Naive thymus-derived CD4-positive, alpha-beta T cell (primary cell): ENCODE measurements at regions of chr10 and their contacts with region 1.

Region 1: GRCh38 chr10:104268716-104269645 is at the start of gene GSTO2:
- DNase-seq: peak; percentile 87 to 99 (median 98)
- ATAC-seq: peak; percentile 97
- H3K4me3 ChIP-seq: peak within 1 kb of the TSS; percentile 77
- H3K4me3 Mint-ChIP-seq: peak within 1 kb of the TSS; percentile 87 to 98 (median 94)
- H3K27ac ChIP-seq: peak within 1 kb of the TSS; percentile 93
- H3K27ac Mint-ChIP-seq: peak within 1 kb of the TSS; percentile 85 to 98 (median 96)
- H3K4me1 ChIP-seq: peaks cover 23 to 25% of the 10 kb centered on the region in 2 donors
- H3K4me1 Mint-ChIP-seq: peaks cover 25 to 55% (median 49%) of the 10 kb centered on the region in 7 donors
- H3K27me3 ChIP-seq: no peaks in the 10 kb centered on the region
- H3K27me3 Mint-ChIP-seq: no peaks in the 10 kb centered on the region
- total RNA-seq, gene GSTO2: 1.1 to 2.5 (median 1.4) TPM

Region 2: DNA sequence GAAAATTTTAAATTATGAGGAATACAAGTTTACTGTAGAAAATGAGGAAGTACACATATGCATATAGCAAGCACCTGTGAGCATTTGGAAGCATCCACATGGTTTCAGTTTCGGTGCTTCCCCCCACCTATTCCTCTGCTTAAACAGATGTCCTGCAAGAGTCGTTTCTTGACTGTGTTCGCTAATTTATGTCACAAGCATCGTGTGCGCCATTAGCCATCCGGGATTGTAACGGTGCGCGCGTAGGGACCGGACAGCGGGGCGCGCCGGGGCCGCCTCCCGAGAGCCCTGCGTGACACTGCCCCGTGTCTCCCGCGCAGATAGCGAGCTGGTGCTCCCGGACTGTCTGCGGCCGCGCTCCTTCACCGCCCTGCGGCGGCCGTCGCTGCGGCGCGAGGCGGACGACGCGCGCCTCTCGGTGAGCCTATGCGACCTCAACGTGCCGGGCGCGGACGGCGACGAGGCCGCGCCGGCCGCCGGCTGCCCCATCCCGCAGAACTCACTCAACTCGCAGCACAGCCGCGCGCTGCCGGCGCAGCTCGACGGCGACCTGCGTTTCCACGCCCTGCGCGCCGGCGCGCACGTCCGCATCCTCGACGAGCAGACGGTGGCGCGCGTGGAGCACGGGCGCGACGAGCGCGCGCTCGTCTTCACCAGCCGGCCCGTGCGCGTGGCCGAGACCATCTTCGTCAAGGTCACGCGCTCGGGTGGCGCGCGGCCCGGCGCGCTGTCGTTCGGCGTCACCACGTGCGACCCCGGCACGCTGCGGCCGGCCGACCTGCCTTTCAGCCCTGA is 684.6 kb before region 1 on chr10:
- CTCF ChIA-PET with region 1: no interaction called
- POLR2A ChIA-PET with region 1: no interaction called
- intact Hi-C with region 1: loop called in 1 of 2 experiments (anchors 1 kb)
- DNase-seq: peak; percentile 46 to 69 (median 58)
- ATAC-seq: peak; percentile 86
- H3K4me3 ChIP-seq: peak overlapping the region; percentile 91
- H3K4me3 Mint-ChIP-seq: peak overlapping the region; percentile 84 to 98 (median 90)
- H3K27ac ChIP-seq: peak overlapping the region; percentile 65
- H3K27ac Mint-ChIP-seq: peak overlapping the region; percentile 84 to 98 (median 96)
- H3K4me1 ChIP-seq: peaks cover 6 to 10% of the 10 kb centered on the region in 2 donors
- H3K4me1 Mint-ChIP-seq: peaks cover 4 to 27% (median 18%) of the 10 kb centered on the region in 7 donors
- H3K27me3 ChIP-seq: no peaks in the 10 kb centered on the region
- H3K27me3 Mint-ChIP-seq: peaks cover 0 to 10% (median 0%) of the 10 kb centered on the region in 5 donors

Region 3: DNA sequence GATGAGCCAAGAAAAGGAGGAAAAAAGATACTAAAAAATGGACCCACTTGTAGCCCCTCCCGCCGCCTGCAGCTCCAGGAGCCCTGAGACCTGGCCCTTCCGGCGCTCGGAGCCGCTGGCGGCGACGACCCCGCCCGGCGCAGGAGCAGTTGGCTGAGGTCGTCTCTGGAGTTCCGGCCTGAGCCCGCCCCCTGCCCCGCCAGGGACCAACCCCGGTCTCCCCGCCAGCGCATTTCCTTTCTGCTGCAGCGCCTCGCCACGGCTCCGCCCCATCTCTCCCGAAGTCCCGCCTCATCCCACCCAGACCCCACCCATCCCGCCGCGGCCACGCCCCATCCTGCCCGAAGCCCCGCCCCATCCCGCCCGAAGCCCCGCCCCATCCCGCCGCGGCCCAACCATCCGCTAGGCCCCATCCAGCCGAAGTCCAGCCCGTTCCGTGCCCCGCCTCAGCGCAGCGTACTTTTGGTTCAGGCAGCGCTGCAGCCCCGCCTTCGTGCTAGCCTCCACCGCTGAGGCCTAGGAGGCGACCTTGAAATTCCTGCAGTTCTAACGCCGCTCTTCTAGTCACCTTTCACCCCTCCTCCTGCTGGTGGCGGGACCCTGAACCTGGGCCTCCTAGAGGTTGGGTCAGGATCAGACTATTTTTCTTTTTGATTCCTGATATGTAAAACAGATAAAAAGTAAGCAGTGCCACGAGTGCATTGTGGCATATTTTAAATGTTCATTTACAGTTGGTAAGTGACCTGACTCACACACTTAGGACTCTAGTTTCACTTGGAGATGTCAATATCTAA is 350.7 kb before region 1 on chr10 and contains the start of gene STN1:
- CTCF ChIA-PET with region 1: no interaction called
- POLR2A ChIA-PET with region 1: no interaction called
- intact Hi-C with region 1: loop called (anchors 1 kb)
- DNase-seq: peak; percentile 81 to 95 (median 94)
- ATAC-seq: peak; percentile 97
- H3K4me3 ChIP-seq: peak within 1 kb of the TSS; percentile 89
- H3K4me3 Mint-ChIP-seq: peak within 1 kb of the TSS; percentile 88 to 99 (median 97)
- H3K27ac ChIP-seq: peak within 1 kb of the TSS; percentile 79
- H3K27ac Mint-ChIP-seq: peak within 1 kb of the TSS; percentile 95 to 99 (median 97)
- H3K4me1 ChIP-seq: peaks cover 28 to 31% of the 10 kb centered on the region in 2 donors
- H3K4me1 Mint-ChIP-seq: peaks cover 15 to 44% (median 38%) of the 10 kb centered on the region in 7 donors
- H3K27me3 ChIP-seq: no peaks in the 10 kb centered on the region
- H3K27me3 Mint-ChIP-seq: no peaks in the 10 kb centered on the region
- total RNA-seq, gene STN1: 28.8 to 42.6 (median 34.8) TPM

Region 4: DNA sequence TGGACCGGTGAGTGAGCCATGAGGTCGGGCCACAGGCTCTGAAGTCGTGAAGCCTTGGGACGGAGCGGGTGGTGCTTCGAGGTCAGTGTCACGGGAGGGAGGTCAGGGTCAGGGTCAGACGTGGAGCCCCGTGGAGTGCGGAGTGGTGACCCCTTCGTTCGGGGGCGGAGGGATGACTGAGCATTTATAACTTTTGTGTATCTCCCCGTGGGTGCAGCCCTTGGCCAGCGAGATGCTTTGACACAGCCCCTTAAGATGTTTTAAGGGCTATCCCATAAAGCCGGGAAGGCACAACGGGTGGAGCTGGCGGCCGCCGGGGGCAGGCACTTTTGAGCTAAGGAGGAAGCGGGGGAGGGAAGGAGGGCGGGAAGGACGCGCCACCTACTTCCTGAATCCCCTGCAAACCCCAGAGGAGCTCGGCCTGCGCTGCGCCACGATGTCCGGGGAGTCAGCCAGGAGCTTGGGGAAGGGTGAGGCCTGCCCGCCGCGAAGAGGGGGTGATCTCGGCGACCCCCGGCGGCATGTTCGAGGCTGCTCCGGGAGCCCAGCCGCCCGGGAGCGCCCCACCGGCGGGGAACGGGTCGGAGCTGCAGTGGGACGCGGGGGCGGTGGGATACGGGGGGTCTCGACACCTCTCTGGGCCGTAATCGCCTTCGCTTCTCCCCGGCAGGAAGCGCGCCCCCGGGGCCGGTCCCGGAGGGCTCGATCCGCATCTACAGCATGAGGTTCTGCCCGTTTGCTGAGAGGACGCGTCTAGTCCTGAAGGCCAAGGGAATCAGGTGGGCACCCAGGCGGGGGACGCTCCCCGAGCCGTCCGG is 14.3 kb before region 1 on chr10 and contains the start of gene GSTO1:
- CTCF ChIA-PET with region 1: interaction called, 9 read pairs
- POLR2A ChIA-PET with region 1: interaction called, 68 read pairs
- intact Hi-C with region 1: loop called (anchors 1 kb)
- DNase-seq: peak; percentile 28 to 59 (median 35)
- ATAC-seq: peak; percentile 71
- H3K4me3 ChIP-seq: peak within 1 kb of the TSS; percentile 83
- H3K4me3 Mint-ChIP-seq: peak within 1 kb of the TSS; percentile 84 to 100 (median 96)
- H3K27ac ChIP-seq: peak within 1 kb of the TSS; percentile 89
- H3K27ac Mint-ChIP-seq: peak within 1 kb of the TSS; percentile 85 to 97 (median 96)
- H3K4me1 ChIP-seq: peaks cover 9 to 23% of the 10 kb centered on the region in 2 donors
- H3K4me1 Mint-ChIP-seq: peaks cover 33 to 56% (median 48%) of the 10 kb centered on the region in 7 donors
- H3K27me3 ChIP-seq: no peaks in the 10 kb centered on the region
- H3K27me3 Mint-ChIP-seq: peaks cover 0 to 19% (median 0%) of the 10 kb centered on the region in 5 donors
- total RNA-seq, gene GSTO1: 28.1 to 129 (median 49.1) TPM

Region 5: GRCh38 chr10:104308439-104308903 is 39.5 kb after region 1 on chr10:
- CTCF ChIA-PET with region 1: interaction called, 16 read pairs
- POLR2A ChIA-PET with region 1: interaction called, 3 read pairs
- intact Hi-C with region 1: loop called in 1 of 2 experiments (anchors 1 kb)
- DNase-seq: peak in 7 of 9 donors; percentile 51 to 77 (median 71)
- ATAC-seq: peak; percentile 58
- H3K4me3 ChIP-seq: peak overlapping the region; percentile 19
- H3K4me3 Mint-ChIP-seq: peak overlapping the region; percentile 25 to 83 (median 75)
- H3K27ac ChIP-seq: no peak overlapping the region
- H3K27ac Mint-ChIP-seq: peak overlapping the region; percentile 79 to 94 (median 87)
- H3K4me1 ChIP-seq: peaks cover 39 to 43% of the 10 kb centered on the region in 2 donors
- H3K4me1 Mint-ChIP-seq: peaks cover 53 to 89% (median 75%) of the 10 kb centered on the region in 7 donors
- H3K27me3 ChIP-seq: no peaks in the 10 kb centered on the region
- H3K27me3 Mint-ChIP-seq: no peaks in the 10 kb centered on the region

Region 6: DNA sequence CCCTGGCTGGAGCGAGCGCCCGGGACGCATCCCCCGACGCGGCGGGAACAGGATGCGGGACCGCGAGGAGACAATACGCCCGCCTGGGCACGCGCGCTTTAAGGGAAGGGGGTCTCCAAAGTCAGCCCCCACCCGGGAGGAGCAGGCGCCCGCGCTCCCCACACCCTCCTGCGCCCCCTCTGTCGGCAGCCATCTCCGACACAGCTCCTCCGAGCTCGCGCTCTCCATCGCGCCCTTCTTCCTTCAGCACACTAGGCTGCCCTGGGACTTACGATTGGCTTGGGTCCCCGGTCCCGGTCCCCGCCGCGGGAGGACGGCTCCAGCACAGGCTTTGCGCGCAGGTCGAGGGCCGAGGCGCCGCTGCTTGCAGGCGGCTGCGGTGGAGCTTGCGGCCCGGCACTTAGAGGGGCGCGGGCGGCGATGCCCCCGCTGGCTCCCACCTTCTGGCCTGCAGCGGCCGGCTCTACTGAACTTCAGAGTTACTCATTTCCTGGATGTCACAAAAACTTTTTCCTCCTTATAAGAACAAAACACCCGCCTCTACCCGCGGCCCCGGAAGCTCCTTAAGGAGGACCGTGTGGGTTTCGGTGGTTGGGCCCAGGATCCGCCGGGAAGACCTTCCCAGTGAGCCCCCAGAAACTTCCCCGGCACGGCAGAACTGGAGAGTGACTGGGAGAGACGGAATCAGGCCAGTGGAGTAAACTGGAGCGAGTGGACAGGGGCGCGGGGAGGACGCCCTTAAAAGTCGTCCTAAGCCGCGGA is 69.2 kb after region 1 on chr10 and contains the start of gene ITPRIP:
- CTCF ChIA-PET with region 1: interaction called, 5 read pairs
- POLR2A ChIA-PET with region 1: interaction called, 5 read pairs
- intact Hi-C with region 1: loop called (anchors 1 kb)
- DNase-seq: peak; percentile 60 to 89 (median 88)
- ATAC-seq: peak; percentile 86
- H3K4me3 ChIP-seq: peak within 1 kb of the TSS; percentile 85
- H3K4me3 Mint-ChIP-seq: peak within 1 kb of the TSS; percentile 88 to 100 (median 98)
- H3K27ac ChIP-seq: peak within 1 kb of the TSS; percentile 94
- H3K27ac Mint-ChIP-seq: peak within 1 kb of the TSS; percentile 87 to 100 (median 99)
- H3K4me1 ChIP-seq: peaks cover 22 to 34% of the 10 kb centered on the region in 2 donors
- H3K4me1 Mint-ChIP-seq: peaks cover 34 to 58% (median 49%) of the 10 kb centered on the region in 7 donors
- H3K27me3 ChIP-seq: no peaks in the 10 kb centered on the region
- H3K27me3 Mint-ChIP-seq: peaks cover 0 to 10% (median 0%) of the 10 kb centered on the region in 5 donors
- total RNA-seq, gene ITPRIP: 20.0 to 129 (median 27.8) TPM

Region 7: GRCh38 chr10:104540181-104540580 is 271.2 kb after region 1 on chr10:
- CTCF ChIA-PET with region 1: no interaction called
- POLR2A ChIA-PET with region 1: no interaction called
- intact Hi-C with region 1: no loop called
- DNase-seq: no peak
- ATAC-seq: no peak
- H3K4me3 ChIP-seq: no peak overlapping the region
- H3K4me3 Mint-ChIP-seq: no peak overlapping the region
- H3K27ac ChIP-seq: no peak overlapping the region
- H3K27ac Mint-ChIP-seq: no peak overlapping the region
- H3K4me1 ChIP-seq: no peaks in the 10 kb centered on the region
- H3K4me1 Mint-ChIP-seq: no peaks in the 10 kb centered on the region
- H3K27me3 ChIP-seq: no peaks in the 10 kb centered on the region
- H3K27me3 Mint-ChIP-seq: peaks cover 2 to 42% (median 24%) of the 10 kb centered on the region in 5 donors